Endothelial cell of umbilical vein (primary cell): ENCODE measurements at regions of chr3 and their contacts with region 1.

Region 1: GRCh38 chr3:64908292-64908691 is 220.5 kb upstream of the ADAMTS9 start:
- DNase-seq: peak; percentile 90
- H3K4me3 ChIP-seq: peak overlapping the region in 1 of 3 experiments; percentile 20
- H3K27ac ChIP-seq: peak overlapping the region; percentile 89
- H3K4me1 ChIP-seq: peaks cover 30% of the 10 kb centered on the region
- H3K27me3 ChIP-seq: no peaks in the 10 kb centered on the region
- CTCF ChIP-seq: no peak
- POLR2A ChIP-seq: no peak

Region 2: DNA sequence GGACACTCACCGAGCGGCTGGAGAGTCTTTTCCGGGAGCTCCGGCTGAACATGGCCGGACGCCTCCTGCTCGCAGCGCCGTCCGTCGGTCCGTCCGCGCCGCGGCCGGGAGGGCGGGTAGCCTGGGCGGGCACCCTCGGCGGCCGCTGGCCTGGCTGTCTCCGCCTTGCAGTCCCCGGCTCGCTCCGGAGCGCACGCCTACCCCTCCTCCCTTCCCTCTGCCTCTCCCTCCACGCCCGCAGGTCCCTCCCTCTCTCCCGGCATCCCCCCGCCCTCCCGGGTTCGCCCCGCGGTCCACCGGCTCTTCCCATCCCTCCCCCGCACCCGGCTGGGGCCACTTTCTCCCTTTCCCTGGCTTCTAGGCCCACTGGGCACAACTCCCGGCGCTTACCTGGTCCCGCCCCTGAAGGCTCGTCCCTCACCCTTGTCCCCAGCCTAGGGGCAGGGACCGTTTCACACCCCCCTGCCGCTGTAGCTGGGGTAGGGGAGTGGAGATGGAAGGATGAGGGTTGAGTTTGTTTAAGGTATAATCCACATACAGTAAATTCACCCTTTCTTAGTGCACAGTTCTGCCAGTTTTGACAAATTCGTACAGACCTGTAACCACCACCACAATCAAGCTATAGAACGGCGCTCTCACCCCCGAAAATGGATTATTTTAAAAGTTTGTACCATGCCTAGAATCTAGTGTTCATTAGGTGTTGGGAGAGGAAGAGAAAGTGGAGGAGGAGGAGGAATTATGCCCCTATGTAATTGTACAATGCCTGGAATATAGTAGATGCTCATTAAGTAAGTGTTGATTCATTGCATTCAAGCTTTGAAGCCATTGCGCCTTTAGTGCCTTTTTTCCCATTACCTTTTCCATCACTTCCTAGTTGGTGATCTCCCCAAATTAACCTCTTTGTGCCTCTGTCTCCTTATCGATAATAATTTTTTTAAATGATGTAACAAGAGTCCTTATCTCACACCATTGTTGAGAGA is 462.7 kb before region 1 on chr3:
- CTCF ChIA-PET with region 1: no interaction called
- POLR2A ChIA-PET with region 1: no interaction called
- dilution Hi-C with region 1: no loop called
- intact Hi-C with region 1: no loop called
- DNase-seq: no peak
- H3K4me3 ChIP-seq: no peak overlapping the region
- H3K27ac ChIP-seq: no peak overlapping the region
- H3K4me1 ChIP-seq: no peaks in the 10 kb centered on the region
- H3K27me3 ChIP-seq: peaks cover 52 to 59% of the 10 kb centered on the region in 2 experiments
- CTCF ChIP-seq: no peak
- POLR2A ChIP-seq: no peak

Region 3: DNA sequence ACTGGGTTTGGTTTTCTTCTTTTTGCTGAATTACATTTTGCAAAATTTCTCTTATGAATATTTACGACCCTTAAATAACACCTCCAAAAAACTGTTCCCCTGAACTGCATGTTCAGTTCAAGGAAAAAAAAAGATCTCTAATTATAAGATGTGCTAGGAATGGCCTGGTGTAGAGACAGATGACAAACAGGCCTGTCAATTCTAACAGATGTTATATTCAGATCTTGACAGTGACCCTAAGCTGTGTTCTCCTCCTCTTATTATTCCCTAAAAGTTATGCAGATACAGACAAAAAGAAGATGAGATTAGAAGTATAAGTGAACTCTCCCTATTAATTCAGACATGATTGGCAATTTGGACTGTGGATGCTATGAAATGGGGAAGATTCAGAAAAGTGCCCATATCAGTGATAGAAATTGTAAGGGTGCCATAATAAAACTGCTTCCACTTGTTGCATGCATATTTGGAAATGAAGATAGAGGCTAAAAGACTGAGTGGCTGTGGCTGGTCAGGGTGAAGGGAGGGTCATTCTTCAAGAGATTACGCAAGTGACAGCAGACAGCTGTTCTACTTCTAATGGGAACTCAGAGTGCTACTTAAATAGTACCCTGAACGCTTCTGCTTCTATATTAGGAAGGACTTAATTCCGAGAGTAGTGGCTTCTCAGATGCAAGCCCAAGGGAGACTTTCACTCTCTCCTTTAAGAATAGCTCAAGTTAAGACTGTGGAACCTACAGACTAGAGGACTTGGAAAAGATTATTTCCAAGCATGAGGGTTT is 296.0 kb before region 1 on chr3:
- CTCF ChIA-PET with region 1: no interaction called
- POLR2A ChIA-PET with region 1: no interaction called
- dilution Hi-C with region 1: no loop called
- intact Hi-C with region 1: loop called (anchors 2 kb)
- DNase-seq: no peak
- H3K4me3 ChIP-seq: no peak overlapping the region
- H3K27ac ChIP-seq: no peak overlapping the region
- H3K4me1 ChIP-seq: peaks cover 16% of the 10 kb centered on the region
- H3K27me3 ChIP-seq: no peaks in the 10 kb centered on the region
- CTCF ChIP-seq: no peak
- POLR2A ChIP-seq: no peak

Region 4: DNA sequence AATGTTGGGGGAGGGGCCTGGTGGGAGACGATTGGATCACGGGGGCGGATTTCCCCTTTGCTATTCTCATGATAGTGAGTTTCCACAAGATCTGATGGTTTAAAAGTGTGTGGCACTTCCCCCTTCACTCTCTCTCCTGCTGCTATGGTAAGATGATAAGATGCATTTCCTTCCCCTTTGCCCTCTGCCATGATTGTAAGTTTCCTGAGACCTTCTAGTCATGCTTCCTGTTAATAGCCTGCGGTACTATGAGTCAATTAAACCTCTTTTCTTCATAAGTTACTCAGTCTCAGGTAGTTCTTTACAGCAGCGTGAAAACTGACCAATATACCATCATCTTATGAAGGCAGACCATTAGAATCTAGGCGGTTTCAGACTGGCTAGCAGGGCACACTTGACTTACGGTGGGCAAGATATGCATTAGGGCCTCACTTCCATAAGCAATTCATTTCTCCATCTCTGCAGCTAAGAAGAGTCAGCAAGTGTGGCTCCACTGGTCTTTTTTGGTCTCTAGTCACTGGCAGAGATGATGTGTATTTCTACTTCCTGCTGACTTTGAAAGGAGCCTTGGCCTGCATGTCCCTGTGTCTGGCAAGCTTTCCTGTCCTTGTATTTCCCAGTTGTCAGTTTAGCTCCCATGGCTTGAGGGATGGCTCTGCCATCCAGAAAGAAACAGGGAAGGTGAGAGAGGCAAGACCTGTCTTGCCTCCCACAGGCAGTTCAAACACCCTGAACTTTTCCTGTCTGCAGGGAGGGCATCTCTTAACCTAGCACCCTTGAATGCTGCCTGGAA is 111.5 kb before region 1 on chr3:
- CTCF ChIA-PET with region 1: no interaction called
- POLR2A ChIA-PET with region 1: no interaction called
- dilution Hi-C with region 1: no loop called
- intact Hi-C with region 1: loop called (anchors 1 kb)
- DNase-seq: peak; percentile 88
- H3K4me3 ChIP-seq: no peak overlapping the region
- H3K27ac ChIP-seq: peak overlapping the region; percentile 87
- H3K4me1 ChIP-seq: peaks cover 26% of the 10 kb centered on the region
- H3K27me3 ChIP-seq: no peaks in the 10 kb centered on the region
- CTCF ChIP-seq: no peak
- POLR2A ChIP-seq: peak; percentile 71

Region 5: GRCh38 chr3:64824394-64824909 is 83.8 kb before region 1 on chr3:
- CTCF ChIA-PET with region 1: no interaction called
- POLR2A ChIA-PET with region 1: no interaction called
- dilution Hi-C with region 1: no loop called
- intact Hi-C with region 1: loop called (anchors 5 kb)
- DNase-seq: peak; percentile 45
- H3K4me3 ChIP-seq: no peak overlapping the region
- H3K27ac ChIP-seq: no peak overlapping the region
- H3K4me1 ChIP-seq: peaks cover 7% of the 10 kb centered on the region
- H3K27me3 ChIP-seq: no peaks in the 10 kb centered on the region
- CTCF ChIP-seq: no peak
- POLR2A ChIP-seq: no peak

Region 6: GRCh38 chr3:64890006-64890405 is 18.3 kb before region 1 on chr3:
- CTCF ChIA-PET with region 1: interaction called, 3 read pairs
- POLR2A ChIA-PET with region 1: no interaction called
- dilution Hi-C with region 1: no loop called
- intact Hi-C with region 1: loop called (anchors 1 kb)
- DNase-seq: peak; percentile 92
- H3K4me3 ChIP-seq: no peak overlapping the region
- H3K27ac ChIP-seq: peak overlapping the region; percentile 64
- H3K4me1 ChIP-seq: peaks cover 22% of the 10 kb centered on the region
- H3K27me3 ChIP-seq: no peaks in the 10 kb centered on the region
- CTCF ChIP-seq: no peak
- POLR2A ChIP-seq: no peak

Region 7: DNA sequence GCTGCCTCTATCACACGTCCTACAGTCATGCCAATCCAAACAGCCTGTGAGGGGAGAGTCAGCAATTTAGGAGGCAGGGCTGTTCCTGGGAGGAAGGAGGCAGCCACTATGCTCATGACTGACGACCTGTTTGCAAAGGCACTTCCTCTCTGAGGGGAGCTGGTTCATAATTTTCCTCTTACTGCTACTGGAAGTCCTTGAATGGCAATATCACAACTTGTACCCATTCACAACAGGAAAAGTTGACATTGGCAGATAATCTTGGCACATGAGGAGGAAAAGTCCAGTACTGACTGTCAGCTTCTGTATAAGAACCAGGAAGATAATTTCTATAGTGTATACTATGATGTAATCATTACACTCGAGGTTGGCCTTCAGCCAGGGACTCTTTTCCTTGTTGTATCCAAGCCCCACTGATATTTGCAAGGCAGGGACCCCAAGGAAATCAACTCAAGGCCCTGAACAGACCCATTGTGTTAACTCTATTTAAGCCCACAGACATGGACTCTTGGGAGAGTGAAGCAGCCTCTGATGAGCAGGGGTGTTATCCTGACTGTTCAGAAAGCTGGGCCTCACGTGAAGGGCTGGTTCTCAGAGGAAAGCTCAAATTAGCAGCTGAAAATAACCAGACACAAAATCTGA is 46.8 kb after region 1 on chr3:
- CTCF ChIA-PET with region 1: interaction called, 5 read pairs
- POLR2A ChIA-PET with region 1: no interaction called
- dilution Hi-C with region 1: no loop called
- intact Hi-C with region 1: loop called (anchors 1 kb)
- DNase-seq: peak; percentile 96
- H3K4me3 ChIP-seq: no peak overlapping the region
- H3K27ac ChIP-seq: peak overlapping the region; percentile 19
- H3K4me1 ChIP-seq: peaks cover 17% of the 10 kb centered on the region
- H3K27me3 ChIP-seq: no peaks in the 10 kb centered on the region
- CTCF ChIP-seq: no peak
- POLR2A ChIP-seq: no peak

Region 8: DNA sequence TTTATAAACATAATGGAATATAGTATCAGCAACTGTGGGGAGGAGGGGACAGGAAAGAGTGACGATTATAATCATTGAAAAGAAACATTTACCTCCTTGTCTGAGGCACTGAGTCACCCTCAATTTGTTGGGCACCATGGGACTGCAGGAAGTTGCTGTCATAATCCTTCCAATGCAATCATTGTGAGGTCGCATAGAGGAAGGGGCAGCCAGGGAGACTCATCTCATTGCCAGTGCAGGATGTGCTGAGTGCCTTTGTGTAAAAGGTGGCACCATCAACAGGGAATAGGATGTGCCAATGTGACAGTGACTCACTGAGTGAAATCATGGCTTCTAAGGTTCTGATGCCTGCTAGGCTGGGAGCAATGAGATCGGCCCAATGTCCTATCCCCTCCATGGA is 79.9 kb after region 1 on chr3:
- CTCF ChIA-PET with region 1: no interaction called
- POLR2A ChIA-PET with region 1: no interaction called
- dilution Hi-C with region 1: no loop called
- intact Hi-C with region 1: loop called (anchors 1 kb)
- DNase-seq: peak; percentile 70
- H3K4me3 ChIP-seq: no peak overlapping the region
- H3K27ac ChIP-seq: peak overlapping the region; percentile 83
- H3K4me1 ChIP-seq: peaks cover 22% of the 10 kb centered on the region
- H3K27me3 ChIP-seq: no peaks in the 10 kb centered on the region
- CTCF ChIP-seq: no peak
- POLR2A ChIP-seq: no peak